Dendritic cell treated with granulocyte-macrophage colony-stimulating factor and Interleukin-4, amounts not matched to agents 40 ng/mL and 50 ng/mL, for 4 days (primary cell): ENCODE measurements at regions of chr10 and their contacts with region 1.

Region 1: DNA sequence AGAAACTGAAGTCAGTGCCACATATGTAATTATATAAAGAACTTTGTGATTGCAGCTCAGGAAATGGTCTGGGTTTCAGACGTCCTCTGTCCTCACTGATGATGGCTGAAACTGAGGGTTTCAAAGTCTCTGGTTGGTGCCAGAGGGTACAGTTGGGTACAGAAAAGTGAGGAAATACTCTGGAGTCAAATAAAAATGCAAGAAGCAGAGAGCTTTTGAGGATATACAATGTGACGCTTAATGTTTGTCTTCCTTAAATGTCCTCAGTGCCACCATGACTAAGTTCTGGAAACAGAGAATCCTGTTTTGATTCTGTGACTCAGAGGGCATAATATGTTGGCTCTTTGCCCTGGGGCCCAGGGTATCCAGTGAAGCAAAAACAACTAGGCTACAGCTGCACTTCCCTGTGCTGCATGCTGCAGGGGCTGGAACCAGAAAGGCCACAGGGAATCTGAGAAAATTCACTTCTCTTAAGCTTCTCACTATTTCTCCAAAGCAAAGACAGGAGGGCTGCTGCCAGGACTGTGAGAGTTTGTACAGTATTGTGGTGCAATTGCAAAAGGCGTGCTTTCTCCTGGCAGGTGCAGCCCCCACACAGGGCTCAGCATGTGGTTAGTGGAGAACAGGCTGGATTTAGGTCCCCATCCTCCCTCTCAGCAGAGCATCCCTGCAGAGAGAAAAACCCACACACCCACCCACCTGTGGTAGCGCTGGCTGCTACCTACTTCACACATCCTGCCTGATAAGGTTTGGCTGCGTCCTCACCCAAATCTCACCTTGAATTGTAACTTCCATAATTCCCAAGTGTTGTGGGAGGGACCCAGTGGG is 169.5 kb upstream of the SVIL start:
- H3K4me3 Mint-ChIP-seq: peak overlapping the region; percentile 17
- H3K27ac Mint-ChIP-seq: peak overlapping the region; percentile 82
- H3K4me1 Mint-ChIP-seq: peaks cover 59% of the 10 kb centered on the region
- H3K27me3 Mint-ChIP-seq: peaks cover 3% of the 10 kb centered on the region

Region 2: GRCh38 chr10:29761916-29762315 is 42.3 kb before region 1 on chr10:
- intact Hi-C with region 1: loop called (anchors 5 kb)
- H3K4me3 Mint-ChIP-seq: no peak overlapping the region
- H3K27ac Mint-ChIP-seq: peak overlapping the region; percentile 97
- H3K4me1 Mint-ChIP-seq: peaks cover 62% of the 10 kb centered on the region
- H3K27me3 Mint-ChIP-seq: no peaks in the 10 kb centered on the region